ENCODE measurements at regions of chr12 and their contacts with region 1.

Region 1: GRCh38 chr12:103930034-103930786 is at the start of gene HSP90B1:
- DNase-seq: peak; percentile 100
- ATAC-seq: peak; percentile 75
- H3K4me3 Mint-ChIP-seq: peak within 1 kb of the TSS; percentile 77
- H3K27ac Mint-ChIP-seq: peak within 1 kb of the TSS; percentile 100
- H3K4me1 Mint-ChIP-seq: peaks cover 54% of the 10 kb centered on the region
- H3K27me3 Mint-ChIP-seq: no peaks in the 10 kb centered on the region
- total RNA-seq, gene HSP90B1: 384 to 394 TPM

Region 2: GRCh38 chr12:103877934-103878510 is 52.2 kb before region 1 on chr12:
- CTCF ChIA-PET with region 1: interaction called, 4 read pairs
- POLR2A ChIA-PET with region 1: no interaction called
- intact Hi-C with region 1: loop called in 1 of 2 experiments (anchors 1 kb)
- DNase-seq: peak; percentile 75
- ATAC-seq: peak; percentile 85
- H3K4me3 Mint-ChIP-seq: no peak overlapping the region
- H3K27ac Mint-ChIP-seq: no peak overlapping the region
- H3K4me1 Mint-ChIP-seq: peaks cover 21% of the 10 kb centered on the region
- H3K27me3 Mint-ChIP-seq: no peaks in the 10 kb centered on the region

Region 3: DNA sequence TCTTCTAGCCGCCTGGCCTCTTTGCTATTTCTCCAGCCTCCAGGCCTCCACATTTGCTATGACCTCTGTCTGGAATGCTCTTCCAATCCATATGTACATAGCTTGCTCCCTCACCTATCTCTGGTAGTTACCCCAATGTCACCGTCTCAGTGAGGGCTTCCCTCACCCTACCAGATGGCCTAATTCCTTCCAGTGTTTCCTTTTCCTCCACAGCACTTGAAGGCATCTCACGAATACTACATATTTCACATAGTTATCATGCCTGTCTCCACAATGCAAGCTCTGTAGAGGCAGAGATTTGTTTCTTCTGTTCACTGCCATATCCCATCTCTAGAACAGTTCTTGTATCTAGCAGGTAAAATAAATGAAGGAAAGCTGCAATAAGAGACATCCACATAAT is 21.3 kb before region 1 on chr12:
- CTCF ChIA-PET with region 1: interaction called, 6 read pairs
- POLR2A ChIA-PET with region 1: interaction called, 20 read pairs
- intact Hi-C with region 1: loop called (anchors 1 kb)
- DNase-seq: no peak
- ATAC-seq: no peak
- H3K4me3 Mint-ChIP-seq: no peak overlapping the region
- H3K27ac Mint-ChIP-seq: no peak overlapping the region
- H3K4me1 Mint-ChIP-seq: peaks cover 40% of the 10 kb centered on the region
- H3K27me3 Mint-ChIP-seq: no peaks in the 10 kb centered on the region

Region 4: GRCh38 chr12:103956516-103957027 is 26.4 kb after region 1 on chr12:
- CTCF ChIA-PET with region 1: interaction called, 4 read pairs
- POLR2A ChIA-PET with region 1: interaction called, 14 read pairs
- intact Hi-C with region 1: loop called (anchors 1 kb)
- DNase-seq: no peak
- ATAC-seq: peak; percentile 0
- H3K4me3 Mint-ChIP-seq: peak overlapping the region; percentile 95
- H3K27ac Mint-ChIP-seq: peak overlapping the region; percentile 94
- H3K4me1 Mint-ChIP-seq: peaks cover 45% of the 10 kb centered on the region
- H3K27me3 Mint-ChIP-seq: no peaks in the 10 kb centered on the region

Region 5: GRCh38 chr12:104083769-104084475 is 153.7 kb after region 1 on chr12:
- CTCF ChIA-PET with region 1: no interaction called
- POLR2A ChIA-PET with region 1: interaction called, 3 read pairs
- intact Hi-C with region 1: loop called in 1 of 2 experiments (anchors 1 kb)
- DNase-seq: peak; percentile 74
- ATAC-seq: peak; percentile 94
- H3K4me3 Mint-ChIP-seq: no peak overlapping the region
- H3K27ac Mint-ChIP-seq: peak overlapping the region; percentile 14
- H3K4me1 Mint-ChIP-seq: peaks cover 17% of the 10 kb centered on the region
- H3K27me3 Mint-ChIP-seq: no peaks in the 10 kb centered on the region

Region 6: DNA sequence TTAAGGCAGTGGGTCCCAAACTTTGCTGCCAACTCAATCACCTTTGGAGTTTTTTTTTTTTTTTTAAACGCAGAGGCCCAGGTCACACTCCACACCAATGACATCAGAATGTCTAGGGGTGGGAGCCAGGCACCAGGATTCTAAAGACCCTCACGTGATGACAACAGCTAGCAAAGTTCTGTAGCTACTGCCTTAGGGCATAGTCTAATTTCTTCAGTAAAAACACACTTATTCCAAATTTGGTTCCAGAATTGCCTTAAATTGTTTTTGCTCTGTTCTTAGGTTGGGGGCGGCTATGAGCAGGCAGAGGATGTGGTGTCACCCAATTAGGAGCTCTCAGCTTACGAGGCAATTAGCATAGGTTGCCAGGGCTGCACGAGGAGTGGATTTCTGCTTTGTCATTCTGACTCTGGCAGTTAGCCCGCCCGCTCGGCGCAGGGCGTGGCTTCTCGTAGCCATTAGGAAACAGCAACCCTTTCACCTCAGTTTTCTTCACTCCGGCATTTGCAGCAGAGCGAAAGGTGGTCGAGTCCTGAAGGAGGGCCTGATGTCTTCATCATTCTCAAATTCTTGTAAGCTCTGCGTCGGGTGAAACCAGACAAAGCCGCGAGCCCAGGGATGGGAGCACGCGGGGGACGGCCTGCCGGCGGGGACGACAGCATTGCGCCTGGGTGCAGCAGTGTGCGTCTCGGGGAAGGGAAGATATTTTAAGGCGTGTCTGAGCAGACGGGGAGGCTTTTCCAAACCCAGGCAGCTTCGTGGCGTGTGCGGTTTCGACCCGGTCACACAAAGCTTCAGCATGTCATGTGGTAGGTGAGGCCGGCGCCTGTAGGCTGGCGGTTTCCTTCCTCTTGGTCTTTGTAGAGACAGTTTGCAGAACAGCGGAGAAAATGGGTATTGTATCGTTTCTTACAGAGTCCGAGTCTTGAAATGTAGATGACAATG is 356.6 kb after region 1 on chr12:
- CTCF ChIA-PET with region 1: no interaction called
- POLR2A ChIA-PET with region 1: interaction called, 5 read pairs
- intact Hi-C with region 1: loop called (anchors 1 to 10 kb)
- DNase-seq: peak; percentile 95
- ATAC-seq: peak; percentile 84
- H3K4me3 Mint-ChIP-seq: peak overlapping the region; percentile 95
- H3K27ac Mint-ChIP-seq: peak overlapping the region; percentile 97
- H3K4me1 Mint-ChIP-seq: peaks cover 12% of the 10 kb centered on the region
- H3K27me3 Mint-ChIP-seq: no peaks in the 10 kb centered on the region